BJ (cell line): ENCODE measurements at regions of chr9 and their contacts with region 1.

Region 1: DNA sequence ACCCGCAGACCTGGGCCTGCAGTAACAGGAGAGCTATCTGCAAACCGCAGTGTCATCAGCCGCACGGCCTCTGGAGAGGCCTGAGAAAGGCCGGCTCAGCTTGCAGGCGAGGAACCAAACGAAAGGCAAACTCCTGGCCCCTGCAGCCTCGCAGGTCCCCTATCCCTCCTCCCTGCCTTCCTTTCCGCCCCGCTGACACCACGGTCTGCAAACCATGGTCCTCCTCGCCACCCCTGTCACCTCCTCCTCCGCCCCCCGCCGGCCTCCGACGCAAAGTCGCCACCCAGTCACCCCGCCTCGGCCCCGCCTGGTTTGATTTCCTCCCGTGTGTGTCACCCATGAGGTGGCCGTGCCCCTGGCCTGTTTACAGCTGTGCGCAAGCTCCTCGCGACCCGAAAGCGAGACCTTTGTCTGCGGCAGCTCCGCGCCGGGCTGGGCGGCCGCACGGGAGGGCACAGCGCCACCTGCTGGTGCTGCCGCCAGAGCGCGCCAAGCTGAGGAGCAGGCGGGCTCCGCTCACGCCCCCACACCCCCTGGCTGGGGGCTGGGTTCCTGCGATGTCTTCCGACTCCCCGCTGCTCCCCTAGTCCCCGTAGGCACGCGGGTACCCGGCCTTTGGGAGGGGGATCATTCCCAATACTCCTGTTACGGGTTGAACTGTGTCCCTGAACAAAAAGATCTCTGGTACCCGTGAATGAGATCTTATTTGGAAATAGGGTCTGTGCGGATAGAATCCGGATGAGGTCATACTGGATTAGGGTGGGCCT is 19.4 kb downstream of the GBGT1 start:
- DNase-seq: no peak
- H3K4me3 ChIP-seq: peak overlapping the region; percentile 37
- H3K27me3 ChIP-seq: no peaks in the 10 kb centered on the region
- CTCF ChIP-seq: peak; percentile 81

Region 2: DNA sequence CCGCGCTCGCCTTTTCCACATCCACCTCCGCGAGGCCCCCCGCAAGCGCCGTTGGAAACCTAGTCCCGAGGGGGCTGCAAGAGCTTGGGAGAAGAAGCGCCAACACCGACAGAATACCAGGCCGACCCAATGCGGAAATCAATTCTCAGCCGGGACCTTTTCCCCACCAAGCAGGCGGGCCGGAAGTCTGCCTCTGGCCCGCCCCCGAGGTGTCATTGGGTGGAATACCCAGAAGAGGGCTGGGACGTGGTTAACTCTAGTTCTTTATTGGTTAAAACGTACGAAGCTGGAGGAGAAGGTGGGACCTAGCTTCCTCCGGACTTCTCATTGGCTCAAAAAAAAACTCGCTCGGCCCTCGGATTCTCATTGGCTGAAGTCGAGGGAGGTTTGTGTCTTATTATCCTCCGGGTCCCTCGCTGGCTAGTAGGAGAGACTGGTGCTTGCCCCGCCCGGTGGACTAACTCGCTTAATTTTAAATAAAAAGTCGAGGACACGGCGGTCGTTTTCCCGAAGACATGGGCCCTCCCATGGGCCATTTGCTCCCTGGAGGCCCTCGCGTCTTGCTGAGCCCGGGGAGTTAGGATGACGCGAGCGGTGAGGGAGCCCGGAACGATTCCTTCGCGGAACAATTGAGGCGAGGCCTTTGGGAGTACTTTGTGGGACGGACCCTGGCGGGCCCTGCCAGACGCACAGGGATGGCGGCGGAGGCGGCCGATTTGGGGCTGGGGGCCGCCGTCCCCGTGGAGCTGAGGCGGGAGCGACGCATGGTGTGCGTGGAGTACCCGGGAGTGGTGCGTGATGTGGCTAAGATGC is 113.8 kb before region 1 on chr9 and contains the start of gene GTF3C5:
- CTCF ChIA-PET with region 1: interaction called, 20 read pairs
- POLR2A ChIA-PET with region 1: interaction called, 7 read pairs
- DNase-seq: peak; percentile 98
- H3K4me3 ChIP-seq: peak within 1 kb of the TSS; percentile 88
- H3K27me3 ChIP-seq: no peaks in the 10 kb centered on the region
- CTCF ChIP-seq: no peak
- polyA plus RNA-seq, gene GTF3C5: 36.0 and 47.7 TPM in 2 replicates

Region 3: GRCh38 chr9:133054966-133055365 is 89.4 kb before region 1 on chr9:
- CTCF ChIA-PET with region 1: interaction called, 21 read pairs
- POLR2A ChIA-PET with region 1: no interaction called
- DNase-seq: peak; percentile 88
- H3K4me3 ChIP-seq: no peak overlapping the region
- H3K27me3 ChIP-seq: no peaks in the 10 kb centered on the region
- CTCF ChIP-seq: no peak

Region 4: DNA sequence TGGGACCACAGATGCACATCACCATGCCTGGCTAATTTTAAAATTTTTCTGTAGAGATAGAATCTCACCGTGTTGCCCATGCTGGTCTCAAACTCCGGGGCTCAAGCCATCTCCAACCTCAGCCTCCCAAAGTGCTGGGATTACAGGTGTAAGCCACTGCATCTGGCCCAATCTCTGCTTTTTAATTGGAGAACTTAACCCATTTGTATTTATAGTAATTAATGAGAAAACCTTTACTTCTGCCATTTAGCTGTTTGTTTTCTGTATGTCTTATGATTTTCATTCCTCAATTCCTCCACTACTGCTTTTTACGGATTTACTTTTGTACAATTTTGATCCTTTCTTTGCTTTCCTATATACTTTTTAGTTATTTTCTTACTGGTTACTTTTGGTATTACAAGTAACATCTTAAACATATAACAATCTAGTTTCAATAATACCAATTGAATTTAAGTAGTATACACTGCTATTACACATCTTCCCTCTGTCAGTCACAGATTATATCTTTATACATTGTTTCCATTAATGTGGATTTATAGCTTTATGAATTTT is 49.4 kb before region 1 on chr9:
- CTCF ChIA-PET with region 1: interaction called, 505 read pairs
- POLR2A ChIA-PET with region 1: no interaction called
- DNase-seq: no peak
- H3K4me3 ChIP-seq: no peak overlapping the region
- H3K27me3 ChIP-seq: no peaks in the 10 kb centered on the region
- CTCF ChIP-seq: no peak

Region 5: GRCh38 chr9:133133681-133134418 is 10.5 kb before region 1 on chr9:
- CTCF ChIA-PET with region 1: interaction called, 70 read pairs
- POLR2A ChIA-PET with region 1: no interaction called
- DNase-seq: peak; percentile 90
- H3K4me3 ChIP-seq: no peak overlapping the region
- H3K27me3 ChIP-seq: no peaks in the 10 kb centered on the region
- CTCF ChIP-seq: no peak